ENCODE measurements at regions of chr16 and their contacts with region 1.

Region 1: DNA sequence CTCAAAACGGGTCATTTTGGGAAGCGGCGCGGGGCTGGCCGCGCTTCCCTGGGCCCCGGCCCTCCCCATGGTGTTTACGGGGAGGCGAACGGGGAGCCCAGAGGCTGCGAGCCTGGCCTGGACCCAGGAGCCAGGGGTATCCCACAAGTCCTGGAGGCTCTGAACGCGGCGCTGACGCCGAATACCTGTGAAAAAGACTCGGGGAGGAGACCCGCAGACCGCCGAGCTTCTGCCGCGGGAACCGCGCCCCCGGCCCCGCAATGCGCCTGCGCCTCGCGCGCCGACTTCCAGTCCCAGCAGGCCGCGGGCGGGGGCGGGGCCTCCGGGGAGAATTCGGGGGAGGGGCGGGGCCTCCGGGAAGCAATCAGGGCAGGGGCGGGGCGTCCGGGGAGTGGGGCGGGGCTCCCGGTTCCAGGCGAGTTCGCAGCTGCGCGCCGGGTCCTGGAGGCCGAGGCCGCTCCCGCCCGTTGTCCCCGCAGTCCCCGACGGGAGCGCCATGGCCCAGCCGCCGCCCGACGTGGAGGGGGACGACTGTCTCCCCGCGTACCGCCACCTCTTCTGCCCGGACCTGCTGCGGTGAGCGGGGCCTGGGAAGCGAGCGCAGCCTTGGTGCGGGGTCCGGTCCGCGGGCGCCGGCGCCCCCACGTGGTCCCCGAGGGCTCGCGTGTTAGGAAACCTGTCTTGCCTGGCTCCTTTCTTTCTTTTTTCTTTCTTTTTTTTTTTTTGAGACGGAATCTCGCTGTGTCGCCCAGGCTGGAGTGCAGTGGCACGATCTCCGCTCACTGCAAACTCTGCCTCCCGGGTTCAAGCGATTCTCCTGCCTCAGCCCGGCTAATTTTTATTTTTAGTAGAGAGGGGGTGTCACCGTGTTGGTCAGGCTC is at the start of gene DECR2:
- DNase-seq: peak; percentile 99
- ATAC-seq: peak; percentile 85
- H3K4me3 Mint-ChIP-seq: peak within 1 kb of the TSS; percentile 89
- H3K27ac Mint-ChIP-seq: peak within 1 kb of the TSS; percentile 79
- H3K4me1 Mint-ChIP-seq: peaks cover 8% of the 10 kb centered on the region
- H3K27me3 Mint-ChIP-seq: peaks cover 14% of the 10 kb centered on the region
- total RNA-seq, gene DECR2: 5.6 to 7.9 TPM

Region 2: DNA sequence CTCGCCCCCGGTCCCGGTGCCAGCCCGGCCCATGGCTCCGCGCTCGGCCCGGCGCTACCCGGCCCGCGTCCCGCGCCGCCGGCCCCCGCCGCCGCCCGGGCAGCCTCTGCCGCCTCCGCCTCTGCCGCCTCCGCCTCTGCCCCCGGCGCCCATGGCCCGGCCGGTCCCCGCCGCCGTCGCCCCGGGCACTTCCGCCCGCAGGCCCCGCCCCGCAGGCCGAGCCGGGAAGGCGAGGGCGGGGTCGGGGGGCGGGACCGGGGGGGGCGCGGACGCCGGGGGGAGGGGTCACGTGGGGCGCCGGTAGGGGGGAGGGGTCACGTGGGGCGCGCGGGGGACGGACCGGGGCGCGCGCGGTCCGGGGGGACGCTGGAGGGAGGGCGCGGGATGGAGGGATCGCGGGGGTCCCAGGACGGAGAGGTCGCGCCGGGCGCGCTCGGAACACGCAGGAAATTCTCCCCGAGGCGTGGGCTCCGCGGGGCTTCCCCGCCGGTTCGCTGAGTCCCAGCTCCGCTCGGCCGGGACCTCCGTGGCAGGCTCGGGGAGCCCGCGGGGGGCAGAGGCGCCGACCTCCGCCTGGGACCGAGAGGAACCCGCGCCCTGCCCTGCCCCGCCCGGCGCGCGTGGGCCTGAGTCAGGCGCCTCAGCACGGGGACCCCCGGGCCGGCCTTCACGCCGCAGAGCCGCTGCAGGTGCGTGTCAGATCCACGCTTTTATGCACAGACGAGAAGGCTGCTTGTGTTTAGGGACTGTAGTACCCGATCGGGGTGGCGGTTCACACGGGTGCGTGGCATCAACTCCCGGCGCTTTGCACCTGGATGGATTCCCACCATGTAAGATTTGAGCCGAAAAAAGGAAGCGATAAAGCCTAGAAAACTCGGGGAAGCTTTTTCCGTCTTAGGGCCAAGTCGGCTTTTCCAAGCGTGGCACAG is 19.7 kb before region 1 on chr16 and contains the start of gene PGAP6:
- POLR2A ChIA-PET with region 1: interaction called, 14 read pairs
- DNase-seq: peak; percentile 82
- ATAC-seq: peak; percentile 67
- H3K4me3 Mint-ChIP-seq: peak within 1 kb of the TSS; percentile 87
- H3K27ac Mint-ChIP-seq: peak within 1 kb of the TSS; percentile 34
- H3K4me1 Mint-ChIP-seq: peaks cover 9% of the 10 kb centered on the region
- H3K27me3 Mint-ChIP-seq: peaks cover 5% of the 10 kb centered on the region
- total RNA-seq, gene PGAP6: 58.9 to 59.0 TPM

Region 3: DNA sequence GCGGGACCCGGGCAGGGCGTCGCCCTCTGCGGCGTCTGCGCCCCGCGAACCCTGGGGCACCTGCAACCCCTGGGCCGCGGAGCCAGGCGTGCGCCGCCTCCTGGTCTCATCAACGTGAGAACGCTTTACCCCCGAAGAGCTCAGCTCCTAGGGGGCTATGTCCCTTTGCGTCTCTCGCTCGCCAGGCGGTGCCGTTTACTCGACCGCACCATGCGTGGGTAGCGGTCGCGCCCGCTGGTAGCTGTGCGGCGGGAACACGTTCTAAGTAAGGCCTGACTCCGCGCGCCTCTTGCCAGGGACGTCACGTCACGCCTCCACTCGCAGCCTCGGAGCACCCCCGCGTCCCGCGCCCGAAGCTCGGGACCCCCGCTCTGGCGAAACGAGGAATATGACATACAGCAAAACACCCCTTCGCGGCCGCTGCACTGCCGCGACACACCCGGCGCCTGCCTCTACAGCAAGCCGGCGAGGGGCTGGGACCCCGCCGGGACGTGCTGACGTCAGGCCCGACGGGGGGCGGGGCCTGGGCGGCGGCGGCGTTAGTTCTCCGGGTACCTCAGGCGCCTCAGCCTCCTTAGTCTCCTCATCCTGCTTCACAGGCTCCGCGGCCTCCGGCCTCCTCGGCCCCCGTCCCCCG is 23.5 kb after region 1 on chr16 and contains the start of gene RAB11FIP3:
- POLR2A ChIA-PET with region 1: interaction called, 13 read pairs
- DNase-seq: peak; percentile 94
- ATAC-seq: peak; percentile 95
- H3K4me3 Mint-ChIP-seq: peak within 1 kb of the TSS; percentile 86
- H3K27ac Mint-ChIP-seq: peak within 1 kb of the TSS; percentile 76
- H3K4me1 Mint-ChIP-seq: peaks cover 19% of the 10 kb centered on the region
- H3K27me3 Mint-ChIP-seq: peaks cover 17% of the 10 kb centered on the region
- total RNA-seq, gene RAB11FIP3: 28.8 to 29.3 TPM

Region 4: GRCh38 chr16:546909-547770 is 145.4 kb after region 1 on chr16:
- POLR2A ChIA-PET with region 1: no interaction called
- DNase-seq: peak; percentile 62
- ATAC-seq: peak; percentile 61
- H3K4me3 Mint-ChIP-seq: no peak overlapping the region
- H3K27ac Mint-ChIP-seq: no peak overlapping the region
- H3K4me1 Mint-ChIP-seq: no peaks in the 10 kb centered on the region
- H3K27me3 Mint-ChIP-seq: no peaks in the 10 kb centered on the region

Measured in activated naive CD8-positive, alpha-beta T cell treated with anti-CD3 and anti-CD28 coated beads, Interleukin-2, amount 10 ng/mL, durations not matched to agents 7 days and 5 days (primary cell).